ENCODE measurements at regions of chr3 and their contacts with region 1.

Region 1: GRCh38 chr3:141875374-141875892 is 1.0 kb upstream of the ATP1B3 start:
- DNase-seq: peak; percentile 87 to 92
- H3K4me3 ChIP-seq: peak overlapping the region; percentile 71 to 93
- H3K27ac ChIP-seq: peak overlapping the region; percentile 97 to 99
- H3K4me1 ChIP-seq: peaks cover 0 to 26% (median 13%) of the 10 kb centered on the region in 4 donors
- H3K27me3 ChIP-seq: no peaks in the 10 kb centered on the region
- CTCF ChIP-seq: peak; percentile 69 to 81

Region 2: DNA sequence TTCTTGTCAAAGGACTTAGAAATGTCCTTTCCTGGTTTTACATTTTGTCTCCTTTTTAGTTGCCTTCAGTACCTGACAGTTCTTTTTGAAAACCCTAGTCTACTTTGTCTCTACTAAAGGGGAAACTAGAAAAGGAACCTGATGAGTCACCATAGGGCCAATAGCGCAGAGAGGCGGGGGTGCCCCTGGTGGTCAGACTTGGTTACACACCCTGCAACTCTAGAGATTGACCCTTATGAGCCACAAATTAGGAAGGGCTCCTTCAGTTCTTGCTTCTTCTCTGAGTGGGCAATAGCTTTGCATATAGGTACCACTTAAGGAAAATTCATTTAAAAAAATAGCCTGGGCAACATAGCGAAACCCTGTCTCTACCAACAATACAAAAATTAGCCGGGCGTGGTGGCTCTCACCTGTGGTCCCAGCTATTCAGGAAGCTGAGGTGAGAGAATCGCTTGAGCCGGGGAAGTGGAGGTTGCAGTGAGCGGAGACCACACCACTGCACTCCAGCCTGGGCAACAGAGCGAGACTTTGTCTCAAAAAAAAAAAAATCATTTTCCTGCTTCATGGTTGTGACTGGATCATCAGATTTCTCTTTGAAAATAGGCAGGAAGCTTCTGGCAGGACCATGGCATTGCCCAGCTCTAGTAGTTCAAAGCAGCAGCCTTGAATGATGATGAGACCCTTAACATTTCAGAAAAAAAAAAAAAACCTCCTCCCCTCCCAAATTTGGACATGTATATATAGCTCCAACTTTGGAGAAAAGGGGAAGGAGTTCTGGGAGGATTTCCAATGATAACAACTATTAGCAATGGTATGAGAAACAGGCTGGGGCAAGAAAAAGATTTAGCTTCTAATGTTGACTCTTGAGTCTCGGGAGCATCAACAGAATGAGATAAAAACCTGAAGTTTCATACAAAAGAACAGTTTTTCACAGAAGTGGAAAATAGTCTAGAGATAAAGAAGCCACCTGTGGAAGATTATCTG is 433.8 kb before region 1 on chr3:
- intact Hi-C with region 1: no loop called
- DNase-seq: peak; percentile 77 to 86
- H3K4me3 ChIP-seq: peak overlapping the region in 1 of 2 donors; percentile 10
- H3K27ac ChIP-seq: peak overlapping the region; percentile 72 to 84
- H3K4me1 ChIP-seq: peaks cover 0 to 90% (median 18%) of the 10 kb centered on the region in 4 donors
- H3K27me3 ChIP-seq: no peaks in the 10 kb centered on the region
- CTCF ChIP-seq: peak; percentile 81 to 86

Region 3: DNA sequence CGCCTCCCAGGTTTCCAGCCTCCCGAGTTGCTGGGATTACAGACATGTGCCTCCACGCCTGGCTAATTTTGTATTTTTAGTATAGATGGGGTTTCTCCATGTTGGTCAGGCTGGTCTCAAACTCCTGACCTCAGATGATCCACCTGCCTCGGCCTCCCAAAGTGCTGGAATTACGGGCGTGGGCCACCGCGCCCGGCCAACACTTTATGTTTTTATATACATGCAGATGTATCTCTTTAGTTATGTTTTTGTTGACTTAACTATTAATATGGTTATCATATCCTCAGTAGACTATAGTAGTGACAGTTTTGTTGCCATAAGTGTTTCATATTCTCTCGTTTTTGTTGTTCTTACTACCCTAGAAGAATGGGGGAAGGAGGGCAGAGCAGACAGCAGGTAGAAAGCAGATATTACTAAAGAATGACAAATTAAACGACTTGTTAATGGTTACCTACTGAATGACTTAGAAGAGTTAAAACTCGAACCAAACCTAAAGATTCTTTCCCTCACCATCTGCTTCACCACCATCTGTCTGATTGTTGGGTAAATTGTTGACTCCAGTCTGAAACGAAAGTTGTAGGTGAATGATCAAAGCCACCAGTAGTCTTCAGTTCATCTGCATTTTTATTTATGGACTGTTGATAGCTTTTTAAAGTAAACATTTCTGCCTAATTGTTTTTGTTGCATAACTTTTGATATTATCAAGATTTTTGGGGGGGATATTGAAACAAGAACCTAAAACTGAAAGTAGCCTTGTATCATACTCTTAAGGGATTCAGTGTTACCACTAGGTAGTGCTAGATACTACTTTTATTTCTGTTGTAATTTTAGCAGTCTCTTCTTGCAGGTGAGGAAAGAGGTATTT is 299.3 kb before region 1 on chr3:
- intact Hi-C with region 1: loop called (anchors 10 kb)
- DNase-seq: no peak
- H3K4me3 ChIP-seq: no peak overlapping the region
- H3K27ac ChIP-seq: no peak overlapping the region
- H3K4me1 ChIP-seq: no peaks in the 10 kb centered on the region
- H3K27me3 ChIP-seq: no peaks in the 10 kb centered on the region
- CTCF ChIP-seq: peak; percentile 51 to 53

Region 4: GRCh38 chr3:141738022-141738890 is 137.2 kb before region 1 on chr3 and contains the start of gene RNF7:
- intact Hi-C with region 1: loop called (anchors 5 kb)
- DNase-seq: peak; percentile 92 to 97
- H3K4me3 ChIP-seq: peak within 1 kb of the TSS; percentile 76 to 88
- H3K27ac ChIP-seq: peak within 1 kb of the TSS; percentile 95 to 96
- H3K4me1 ChIP-seq: peaks cover 0 to 37% (median 25%) of the 10 kb centered on the region in 4 donors
- H3K27me3 ChIP-seq: no peaks in the 10 kb centered on the region
- CTCF ChIP-seq: peak; percentile 86 to 90